CD4-positive, alpha-beta memory T cell (primary cell): ENCODE measurements at regions of chr19 and their contacts with region 1.

Region 1: DNA sequence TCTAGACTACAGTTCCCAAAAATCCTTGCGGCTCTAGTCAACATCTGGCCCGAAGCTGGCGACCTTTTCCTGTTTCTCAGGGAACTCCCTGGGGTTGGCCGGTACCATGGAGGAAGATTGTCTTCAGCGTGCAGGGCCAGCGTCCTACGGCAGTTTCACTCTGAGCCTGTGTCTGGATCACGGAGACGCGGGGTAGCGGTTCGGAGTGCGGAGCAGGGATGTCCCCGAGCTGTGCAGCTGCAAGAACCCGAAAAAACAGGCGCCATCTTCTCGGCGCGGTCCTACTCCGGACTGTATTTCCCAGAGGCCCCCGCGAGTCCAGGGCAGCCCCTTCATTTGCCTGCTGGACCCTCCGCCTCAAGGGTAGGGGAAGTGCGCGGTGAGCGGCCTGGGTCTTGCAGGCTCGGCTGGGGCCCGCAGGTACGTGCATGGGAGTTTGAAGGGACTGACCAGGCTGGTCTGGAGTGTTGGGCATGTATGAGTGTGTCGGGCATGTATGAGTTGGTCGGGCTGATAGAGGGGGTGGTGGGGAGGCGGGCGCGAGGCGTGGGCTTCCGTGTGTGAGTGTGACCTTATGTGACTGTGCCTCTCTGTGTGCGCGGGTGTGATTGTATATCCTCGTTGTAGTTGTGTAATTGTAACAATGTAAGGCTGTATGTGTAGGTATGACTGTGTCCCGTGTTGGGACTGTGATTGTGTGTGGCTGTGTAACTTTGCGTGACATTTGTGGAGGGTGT is at the start of gene ZNF383:
- DNase-seq: peak; percentile 80 to 87 (median 83)
- H3K4me3 ChIP-seq: peak within 1 kb of the TSS; percentile 85 to 99
- H3K4me3 Mint-ChIP-seq: peak within 1 kb of the TSS; percentile 89 to 98 (median 91)
- H3K27ac ChIP-seq: peak within 1 kb of the TSS; percentile 80
- H3K27ac Mint-ChIP-seq: peak within 1 kb of the TSS; percentile 88 to 98 (median 96)
- H3K4me1 ChIP-seq: peaks cover 16% of the 10 kb centered on the region
- H3K4me1 Mint-ChIP-seq: peaks cover 19 to 40% (median 31%) of the 10 kb centered on the region in 4 donors
- H3K27me3 ChIP-seq: no peaks in the 10 kb centered on the region
- H3K27me3 Mint-ChIP-seq: no peaks in the 10 kb centered on the region
- total RNA-seq, gene ZNF383: 32.0 to 34.0 TPM

Region 2: DNA sequence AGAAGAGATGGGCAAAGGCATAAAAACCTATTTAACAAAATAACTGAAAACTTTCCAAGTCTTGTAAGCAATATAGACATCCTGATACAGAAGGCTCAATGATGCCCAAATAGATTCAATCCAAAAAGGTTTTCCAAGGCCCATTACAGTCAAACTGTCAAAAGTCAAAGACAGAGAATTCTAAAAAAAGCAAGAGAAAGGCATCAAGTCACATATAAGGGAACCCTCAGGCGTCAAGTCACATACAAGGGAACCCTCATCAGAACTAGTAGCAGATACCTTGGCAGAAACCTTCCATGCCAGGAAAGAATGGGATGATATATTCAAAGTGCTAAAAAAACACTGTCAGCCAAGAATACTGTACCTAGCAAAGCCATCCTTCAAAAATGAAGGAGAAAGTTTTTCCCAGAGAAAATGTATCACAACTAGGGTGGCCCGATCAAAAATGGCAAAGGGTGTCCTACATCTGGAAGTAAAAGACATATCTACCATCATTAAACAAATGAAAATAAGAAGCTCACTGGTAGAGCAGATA is 323.1 kb before region 1 on chr19:
- CTCF ChIA-PET with region 1: no interaction called
- POLR2A ChIA-PET with region 1: no interaction called
- intact Hi-C with region 1: no loop called
- DNase-seq: no peak
- H3K4me3 ChIP-seq: no peak overlapping the region
- H3K4me3 Mint-ChIP-seq: peak overlapping the region in 2 of 8 donors; percentile 8 to 55
- H3K27ac ChIP-seq: no peak overlapping the region
- H3K27ac Mint-ChIP-seq: no peak overlapping the region
- H3K4me1 ChIP-seq: no peaks in the 10 kb centered on the region
- H3K4me1 Mint-ChIP-seq: peaks cover 0 to 3% (median 0%) of the 10 kb centered on the region in 4 donors
- H3K27me3 ChIP-seq: no peaks in the 10 kb centered on the region
- H3K27me3 Mint-ChIP-seq: no peaks in the 10 kb centered on the region

Region 3: DNA sequence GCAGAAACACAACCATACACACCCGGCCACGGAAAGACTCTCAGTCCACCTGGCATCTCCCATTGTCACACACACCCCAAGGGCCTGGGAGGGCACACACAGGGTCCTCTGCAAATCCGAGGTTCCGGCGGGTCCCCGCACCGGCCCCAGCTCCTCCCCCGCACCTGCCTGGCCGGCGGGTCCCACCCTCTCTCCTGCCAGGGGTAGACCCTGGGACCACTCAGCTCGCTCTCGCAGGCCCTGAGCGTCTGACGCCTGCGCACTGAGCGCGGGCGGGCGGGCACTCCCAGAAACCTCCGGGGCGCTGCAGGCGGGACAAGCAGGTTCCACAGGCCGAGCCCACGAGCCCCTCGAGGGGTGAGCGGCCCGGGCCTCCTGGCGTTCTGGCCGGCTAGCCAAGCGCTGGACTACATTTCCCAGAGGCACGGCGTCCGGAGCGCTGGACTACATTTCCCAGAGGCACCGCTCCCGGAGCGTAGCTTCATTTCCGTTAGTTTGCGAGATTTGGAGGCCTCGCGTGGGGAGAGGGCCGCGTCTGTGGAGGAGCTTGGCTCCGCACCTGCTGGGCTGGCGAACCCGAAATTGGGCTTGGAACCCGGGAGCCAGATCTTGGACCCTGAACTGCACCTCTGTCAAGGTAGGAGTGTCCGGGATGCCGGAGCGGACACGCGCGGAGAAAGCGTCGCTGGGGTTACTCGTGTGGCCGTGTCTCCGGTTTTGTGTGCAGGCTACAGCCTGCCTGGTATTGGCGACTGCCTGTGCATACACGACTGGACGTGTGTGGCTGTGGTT is 139.9 kb before region 1 on chr19 and contains the start of gene ZNF420:
- CTCF ChIA-PET with region 1: no interaction called
- POLR2A ChIA-PET with region 1: interaction called, 15 read pairs
- intact Hi-C with region 1: loop called (anchors 1 kb)
- DNase-seq: peak; percentile 85 to 92 (median 87)
- H3K4me3 ChIP-seq: peak within 1 kb of the TSS; percentile 61 to 88
- H3K4me3 Mint-ChIP-seq: peak within 1 kb of the TSS; percentile 90 to 100 (median 98)
- H3K27ac ChIP-seq: peak within 1 kb of the TSS; percentile 73
- H3K27ac Mint-ChIP-seq: peak within 1 kb of the TSS; percentile 85 to 99 (median 95)
- H3K4me1 ChIP-seq: peaks cover 23% of the 10 kb centered on the region
- H3K4me1 Mint-ChIP-seq: peaks cover 22 to 43% (median 27%) of the 10 kb centered on the region in 4 donors
- H3K27me3 ChIP-seq: no peaks in the 10 kb centered on the region
- H3K27me3 Mint-ChIP-seq: no peaks in the 10 kb centered on the region
- total RNA-seq, gene ZNF420: 25.0 to 28.6 TPM